Heart left ventricle (tissue), 16 donors: ENCODE measurements at regions of chr12 and their contacts with region 1.

Region 1: GRCh38 chr12:9039397-9039977 is 50.1 kb downstream of the KLRG1 start:
- DNase-seq: no peak
- ATAC-seq: peak; percentile 51 to 75 (median 64)
- H3K4me3 ChIP-seq: no peak overlapping the region
- H3K27ac ChIP-seq: no peak overlapping the region
- H3K4me1 ChIP-seq: peaks cover 0 to 11% (median 4%) of the 10 kb centered on the region in 12 donors
- H3K27me3 ChIP-seq: no peaks in the 10 kb centered on the region
- CTCF ChIP-seq: peak; percentile 64 to 84 (median 80)
- POLR2A ChIP-seq: no peak

Region 2: GRCh38 chr12:8544295-8544694 is 495.2 kb before region 1 on chr12:
- intact Hi-C with region 1: loop called in 4 of 10 experiments (anchors 10 kb)
- DNase-seq: peak in 4 of 5 donors; percentile 51 to 62 (median 56)
- ATAC-seq: peak; percentile 54 to 65 (median 62)
- H3K4me3 ChIP-seq: no peak overlapping the region
- H3K27ac ChIP-seq: no peak overlapping the region
- H3K4me1 ChIP-seq: peaks cover 0 to 9% (median 0%) of the 10 kb centered on the region in 12 donors
- H3K27me3 ChIP-seq: peaks cover 0 to 16% (median 0%) of the 10 kb centered on the region in 9 donors
- CTCF ChIP-seq: peak; percentile 75 to 97 (median 92)
- POLR2A ChIP-seq: no peak

Region 3: DNA sequence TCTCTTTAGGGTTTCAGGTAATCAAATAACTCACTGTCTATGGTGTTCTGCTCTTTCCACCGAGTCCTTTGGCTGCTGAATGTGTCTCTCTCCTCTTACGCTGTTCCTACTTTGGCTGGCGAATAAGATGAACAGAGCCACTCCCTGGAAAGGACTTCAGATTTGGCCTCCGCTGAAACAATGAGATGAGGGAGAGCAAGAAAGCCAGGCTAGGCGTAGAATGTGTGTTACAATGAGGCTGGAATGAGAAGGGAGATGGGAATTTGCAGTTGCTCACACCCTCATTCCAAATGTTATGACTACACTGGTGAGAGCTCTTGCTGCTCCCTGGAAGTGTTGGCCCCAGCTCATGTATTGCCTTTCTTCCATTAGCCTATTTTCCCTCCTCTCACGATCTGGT is 376.9 kb before region 1 on chr12 and contains the start of gene MFAP5:
- intact Hi-C with region 1: loop called in 1 of 10 experiments (anchors 10 kb)
- DNase-seq: peak in 2 of 5 donors; percentile 21 to 34
- ATAC-seq: peak; percentile 62 to 84 (median 74)
- H3K4me3 ChIP-seq: peak within 1 kb of the TSS in 10 of 12 donors; percentile 12 to 53 (median 30)
- H3K27ac ChIP-seq: peak within 1 kb of the TSS; percentile 11 to 78 (median 62)
- H3K4me1 ChIP-seq: peaks cover 0 to 6% (median 0%) of the 10 kb centered on the region in 12 donors
- H3K27me3 ChIP-seq: no peaks in the 10 kb centered on the region
- CTCF ChIP-seq: no peak
- POLR2A ChIP-seq: peak in 1 of 2 donors; percentile 21
- total RNA-seq, gene MFAP5: 12.4 to 137 (median 33.0) TPM

Region 4: GRCh38 chr12:8672381-8672780 is 367.1 kb before region 1 on chr12:
- intact Hi-C with region 1: loop called in 1 of 10 experiments (anchors 5 kb)
- DNase-seq: no peak
- ATAC-seq: no peak
- H3K4me3 ChIP-seq: no peak overlapping the region
- H3K27ac ChIP-seq: no peak overlapping the region
- H3K4me1 ChIP-seq: peaks cover 0 to 23% (median 0%) of the 10 kb centered on the region in 12 donors
- H3K27me3 ChIP-seq: no peaks in the 10 kb centered on the region
- CTCF ChIP-seq: no peak
- POLR2A ChIP-seq: no peak

Region 5: GRCh38 chr12:8681041-8681902 is 358.2 kb before region 1 on chr12:
- intact Hi-C with region 1: loop called in 3 of 10 experiments (anchors 5 to 10 kb)
- DNase-seq: peak in 2 of 5 donors; percentile 11 to 30
- ATAC-seq: peak; percentile 62 to 91 (median 66)
- H3K4me3 ChIP-seq: peak overlapping the region in 4 of 12 donors; percentile 11 to 25 (median 16)
- H3K27ac ChIP-seq: peak overlapping the region in 11 of 12 donors; percentile 21 to 73 (median 54)
- H3K4me1 ChIP-seq: peaks cover 0 to 20% (median 0%) of the 10 kb centered on the region in 12 donors
- H3K27me3 ChIP-seq: no peaks in the 10 kb centered on the region
- CTCF ChIP-seq: no peak
- POLR2A ChIP-seq: no peak

Region 6: GRCh38 chr12:8780389-8780788 is 259.1 kb before region 1 on chr12:
- intact Hi-C with region 1: loop called in 3 of 10 experiments (anchors 10 kb)
- DNase-seq: no peak
- ATAC-seq: peak in 1 of 4 donors; percentile 63
- H3K4me3 ChIP-seq: no peak overlapping the region
- H3K27ac ChIP-seq: no peak overlapping the region
- H3K4me1 ChIP-seq: peaks cover 0 to 26% (median 4%) of the 10 kb centered on the region in 12 donors
- H3K27me3 ChIP-seq: no peaks in the 10 kb centered on the region
- CTCF ChIP-seq: peak in 11 of 12 donors; percentile 6 to 50 (median 38)
- POLR2A ChIP-seq: no peak

Region 7: DNA sequence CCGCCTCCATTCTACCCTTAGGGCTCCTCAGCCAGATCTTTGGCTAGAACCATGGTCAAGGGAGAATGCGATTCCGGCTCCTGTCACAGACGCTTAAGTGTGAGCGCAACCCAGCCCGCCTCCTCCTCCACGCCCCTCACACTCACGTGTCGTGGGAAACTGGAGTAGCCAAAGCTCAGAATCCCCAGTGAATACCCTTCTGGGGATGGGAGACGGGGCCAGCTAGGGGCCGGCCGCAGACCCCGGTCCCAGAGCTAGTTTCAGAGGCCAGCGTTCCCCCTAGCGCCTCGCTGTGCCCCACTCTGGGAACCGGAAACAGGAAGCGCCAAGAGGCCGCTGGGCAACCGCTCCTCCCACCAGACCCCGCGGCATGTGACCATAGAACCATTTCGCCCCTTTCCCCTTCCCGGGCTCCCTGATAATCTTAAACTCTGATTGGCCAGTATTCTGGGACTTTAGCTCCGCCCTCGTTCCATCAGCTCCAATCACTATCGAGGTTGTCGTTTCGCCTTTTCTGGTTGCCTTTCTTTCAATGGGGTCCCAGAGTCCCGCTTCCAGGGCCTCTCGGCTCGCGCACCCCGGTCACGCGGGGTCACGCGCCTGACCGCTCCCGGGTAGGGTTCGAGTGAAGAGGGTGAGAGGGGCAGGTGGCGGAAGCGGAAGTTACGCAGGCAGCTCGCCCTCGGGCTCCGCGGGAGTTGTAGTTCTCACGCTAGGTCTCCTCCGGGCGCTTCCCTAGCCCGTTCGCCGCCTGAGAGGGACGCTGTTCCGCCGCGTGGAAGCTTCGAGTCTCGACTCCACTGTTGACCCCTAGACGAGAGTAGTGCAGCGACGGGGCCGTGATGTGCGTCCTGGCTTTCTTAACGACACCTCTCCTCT is 89.9 kb before region 1 on chr12 and contains the start of gene M6PR:
- intact Hi-C with region 1: loop called (anchors 1 to 5 kb)
- DNase-seq: peak; percentile 94 to 96 (median 95)
- ATAC-seq: peak; percentile 94 to 97 (median 96)
- H3K4me3 ChIP-seq: peak within 1 kb of the TSS; percentile 52 to 96 (median 82)
- H3K27ac ChIP-seq: peak within 1 kb of the TSS; percentile 93 to 99 (median 98)
- H3K4me1 ChIP-seq: peaks cover 0 to 57% (median 20%) of the 10 kb centered on the region in 12 donors
- H3K27me3 ChIP-seq: no peaks in the 10 kb centered on the region
- CTCF ChIP-seq: peak; percentile 38 to 83 (median 59)
- POLR2A ChIP-seq: peak in 1 of 2 donors; percentile 71
- total RNA-seq, gene M6PR: 66.7 to 150 (median 102) TPM

Region 8: GRCh38 chr12:9144730-9145106 is 105.2 kb after region 1 on chr12:
- intact Hi-C with region 1: no loop called
- DNase-seq: no peak
- ATAC-seq: no peak
- H3K4me3 ChIP-seq: no peak overlapping the region
- H3K27ac ChIP-seq: no peak overlapping the region
- H3K4me1 ChIP-seq: no peaks in the 10 kb centered on the region
- H3K27me3 ChIP-seq: no peaks in the 10 kb centered on the region
- CTCF ChIP-seq: no peak
- POLR2A ChIP-seq: no peak